Activated CD4-positive, alpha-beta memory T cell treated with anti-CD3 and anti-CD28 coated beads for 36 hours (primary cell): ENCODE measurements at regions of chr2 and their contacts with region 1.

Region 1: GRCh38 chr2:231674587-231675338 is 33.6 kb upstream of the PTMA start:
- DNase-seq: peak; percentile 74
- H3K4me3 Mint-ChIP-seq: no peak overlapping the region
- H3K27ac Mint-ChIP-seq: no peak overlapping the region
- H3K4me1 Mint-ChIP-seq: peaks cover 9% of the 10 kb centered on the region
- H3K27me3 Mint-ChIP-seq: no peaks in the 10 kb centered on the region

Region 2: GRCh38 chr2:231604685-231605606 is 69.8 kb before region 1 on chr2:
- CTCF ChIA-PET with region 1: interaction called, 210 read pairs
- POLR2A ChIA-PET with region 1: no interaction called
- intact Hi-C with region 1: no loop called
- DNase-seq: peak; percentile 94
- H3K4me3 Mint-ChIP-seq: peak overlapping the region; percentile 46
- H3K27ac Mint-ChIP-seq: no peak overlapping the region
- H3K4me1 Mint-ChIP-seq: peaks cover 3% of the 10 kb centered on the region
- H3K27me3 Mint-ChIP-seq: no peaks in the 10 kb centered on the region

Region 3: GRCh38 chr2:231627384-231628120 is 47.2 kb before region 1 on chr2:
- CTCF ChIA-PET with region 1: interaction called, 10 read pairs
- POLR2A ChIA-PET with region 1: interaction called, 4 read pairs
- intact Hi-C with region 1: no loop called
- DNase-seq: no peak
- H3K4me3 Mint-ChIP-seq: no peak overlapping the region
- H3K27ac Mint-ChIP-seq: no peak overlapping the region
- H3K4me1 Mint-ChIP-seq: peaks cover 7% of the 10 kb centered on the region
- H3K27me3 Mint-ChIP-seq: no peaks in the 10 kb centered on the region

Region 4: DNA sequence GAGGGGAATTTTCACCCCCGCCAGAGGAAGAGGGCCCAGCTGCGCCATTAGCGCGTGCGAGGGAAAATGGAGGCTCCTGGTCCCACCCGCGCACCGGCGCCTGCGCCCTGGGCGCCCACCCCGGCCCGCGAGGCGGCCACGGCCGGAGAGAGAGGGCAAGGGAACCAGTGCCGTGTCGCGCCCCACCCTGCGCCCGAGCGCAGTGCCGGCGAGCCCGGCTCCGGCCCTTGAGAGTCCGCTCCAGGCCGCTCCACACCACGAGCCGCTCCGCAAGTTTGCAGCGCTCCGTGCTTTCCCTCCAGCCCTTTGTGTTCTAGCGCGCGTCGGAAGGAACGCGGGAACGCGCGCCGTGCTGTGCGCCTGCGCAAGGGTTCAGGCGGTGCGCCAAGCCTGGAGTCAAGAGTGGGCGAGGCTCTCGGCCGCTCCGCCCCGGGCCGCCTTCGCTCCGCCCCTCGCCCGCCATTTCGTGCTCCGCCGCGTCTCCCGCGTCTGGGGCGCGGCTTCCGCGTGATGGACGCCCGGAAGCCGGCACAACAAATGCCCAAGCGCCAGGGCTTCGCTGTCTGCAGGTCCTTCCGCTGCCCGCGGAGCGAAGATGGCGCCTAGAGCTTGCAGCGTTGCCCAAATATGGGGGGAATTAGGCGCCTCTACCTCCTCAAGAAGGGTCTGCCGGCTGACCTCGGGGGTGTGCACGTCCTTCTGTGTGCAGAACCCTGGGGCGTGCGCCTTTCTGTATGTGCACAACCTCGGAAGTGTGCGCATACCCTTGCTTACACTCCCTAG is 12.5 kb before region 1 on chr2:
- CTCF ChIA-PET with region 1: interaction called, 22 read pairs
- POLR2A ChIA-PET with region 1: no interaction called
- intact Hi-C with region 1: loop called (anchors 1 kb)
- DNase-seq: peak; percentile 97
- H3K4me3 Mint-ChIP-seq: peak overlapping the region; percentile 65
- H3K27ac Mint-ChIP-seq: peak overlapping the region; percentile 94
- H3K4me1 Mint-ChIP-seq: peaks cover 12% of the 10 kb centered on the region
- H3K27me3 Mint-ChIP-seq: no peaks in the 10 kb centered on the region

Region 5: GRCh38 chr2:231696007-231696371 is 21.2 kb after region 1 on chr2:
- CTCF ChIA-PET with region 1: interaction called, 12 read pairs
- POLR2A ChIA-PET with region 1: interaction called, 3 read pairs
- intact Hi-C with region 1: no loop called
- DNase-seq: no peak
- H3K4me3 Mint-ChIP-seq: no peak overlapping the region
- H3K27ac Mint-ChIP-seq: no peak overlapping the region
- H3K4me1 Mint-ChIP-seq: no peaks in the 10 kb centered on the region
- H3K27me3 Mint-ChIP-seq: no peaks in the 10 kb centered on the region

Region 6: DNA sequence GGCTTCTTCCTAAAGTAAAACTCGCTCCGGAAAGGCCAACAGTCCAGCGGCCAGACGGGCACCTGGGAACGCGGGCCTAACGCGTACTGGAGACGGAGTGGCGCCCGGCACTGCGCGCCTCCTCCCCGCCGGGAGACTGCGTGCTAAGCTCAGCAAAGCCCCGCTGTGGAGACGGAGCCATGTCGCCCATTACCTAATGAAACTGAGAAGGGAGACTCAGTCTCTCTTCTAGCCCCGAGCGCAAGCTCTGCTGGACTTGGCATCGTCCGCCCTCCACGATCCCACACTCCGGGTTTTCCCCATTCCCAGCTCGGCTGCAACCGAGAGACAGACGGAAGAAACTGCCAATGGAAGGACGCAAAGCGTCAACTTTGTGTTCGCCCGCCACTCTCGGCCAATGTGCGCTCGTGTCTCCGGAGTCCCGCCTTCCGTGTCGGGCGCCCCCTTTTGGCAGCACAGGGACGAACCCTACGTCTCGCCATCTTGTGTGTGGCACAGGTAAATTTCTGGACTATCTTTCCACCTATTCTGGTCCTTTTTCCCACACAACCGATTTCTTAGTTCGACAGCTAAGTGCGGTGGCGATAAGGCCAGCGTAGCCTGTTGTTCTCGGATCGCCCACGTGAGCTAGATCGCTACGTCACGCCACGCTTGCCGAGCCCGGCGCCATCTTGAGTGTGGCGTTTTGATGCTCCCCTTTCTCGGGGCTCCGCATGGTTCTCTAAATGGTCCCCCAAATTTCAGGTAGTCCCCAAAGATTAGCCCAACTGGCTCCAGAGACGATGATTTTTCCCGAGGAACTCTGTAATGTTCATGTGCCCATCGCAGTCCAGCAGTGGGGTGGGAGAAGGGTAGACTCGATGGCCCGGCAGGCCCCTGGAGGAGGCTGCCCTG is 32.2 kb after region 1 on chr2:
- CTCF ChIA-PET with region 1: interaction called, 578 read pairs
- POLR2A ChIA-PET with region 1: interaction called, 5 read pairs
- intact Hi-C with region 1: no loop called
- DNase-seq: peak; percentile 98
- H3K4me3 Mint-ChIP-seq: peak overlapping the region; percentile 93
- H3K27ac Mint-ChIP-seq: peak overlapping the region; percentile 100
- H3K4me1 Mint-ChIP-seq: peaks cover 18% of the 10 kb centered on the region
- H3K27me3 Mint-ChIP-seq: peaks cover 3% of the 10 kb centered on the region

Region 7: GRCh38 chr2:231780909-231781797 is 106.4 kb after region 1 on chr2 and contains the start of gene PDE6D:
- CTCF ChIA-PET with region 1: interaction called, 11 read pairs
- POLR2A ChIA-PET with region 1: no interaction called
- intact Hi-C with region 1: loop called (anchors 5 kb)
- DNase-seq: peak; percentile 98
- H3K4me3 Mint-ChIP-seq: peak within 1 kb of the TSS; percentile 89
- H3K27ac Mint-ChIP-seq: peak within 1 kb of the TSS; percentile 94
- H3K4me1 Mint-ChIP-seq: peaks cover 52% of the 10 kb centered on the region
- H3K27me3 Mint-ChIP-seq: no peaks in the 10 kb centered on the region
- total RNA-seq, gene PDE6D: 29.5 to 31.1 TPM